ENCODE measurements at regions of chr3 and their contacts with region 1.

Region 1: DNA sequence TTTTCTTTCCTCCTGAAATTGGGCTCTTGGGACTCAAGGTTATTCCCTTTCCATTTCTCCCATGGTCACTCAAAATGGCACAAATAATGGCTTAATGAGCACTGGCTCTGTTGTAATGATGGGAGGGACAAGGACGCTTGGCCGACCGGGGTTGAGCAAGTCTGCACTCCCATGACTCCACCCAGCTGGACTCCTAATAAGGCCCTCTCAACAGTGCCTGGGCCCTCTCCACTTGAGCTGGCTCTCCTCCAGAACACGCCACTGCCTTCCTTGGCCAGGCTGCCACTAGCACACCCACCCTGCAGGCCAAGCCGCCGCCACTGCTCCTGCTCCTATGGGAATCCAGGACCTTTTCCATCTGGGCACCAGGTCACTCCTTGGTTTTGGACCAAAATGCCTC is 42.3 kb downstream of the ADCY5 start:
- DNase-seq: peak; percentile 89
- ATAC-seq: peak; percentile 72

Region 2: DNA sequence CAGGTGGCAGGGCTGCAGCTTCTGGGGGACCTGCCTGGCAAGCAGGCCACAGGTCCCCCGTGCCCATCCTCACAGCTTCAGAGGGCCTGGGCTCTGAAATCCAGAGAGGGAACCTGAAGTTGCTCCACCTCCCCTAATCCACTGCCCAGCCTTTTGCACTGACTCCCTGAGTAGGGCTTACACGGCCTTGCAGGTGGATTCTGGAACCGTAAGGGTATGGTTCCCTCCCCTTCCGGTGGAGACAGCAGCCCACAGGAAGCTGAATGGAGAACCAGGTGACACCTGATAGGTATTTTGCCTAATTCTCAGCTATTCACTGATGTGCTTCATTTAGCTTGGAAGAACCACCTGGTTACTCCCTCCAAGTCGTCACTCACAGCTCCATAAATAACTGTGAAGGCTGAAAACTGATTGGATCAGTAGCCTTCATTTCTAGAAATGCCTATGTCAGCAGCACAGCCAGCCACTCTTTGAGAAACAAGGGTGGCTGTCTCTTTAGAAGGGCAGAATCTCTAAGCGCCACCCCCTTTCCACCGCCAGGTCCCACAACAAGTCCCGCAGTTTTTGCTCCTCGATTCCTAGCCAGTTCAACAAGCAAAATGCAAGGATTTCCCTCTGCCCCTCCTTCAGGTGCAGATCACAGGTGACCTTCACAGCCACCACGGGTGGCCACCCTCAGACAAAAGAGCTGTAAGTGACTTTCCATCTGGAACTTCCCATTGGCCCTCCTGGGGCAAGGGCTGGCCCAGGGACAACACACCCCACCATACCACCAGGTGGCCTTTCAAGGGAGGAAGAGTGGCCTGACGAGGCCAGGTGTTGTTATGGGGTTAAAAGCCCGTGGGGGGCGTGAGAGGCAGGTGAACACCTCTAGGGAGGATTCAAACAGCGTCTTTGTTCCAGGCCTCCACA is 92.0 kb before region 1 on chr3:
- intact Hi-C with region 1: no loop called
- DNase-seq: peak; percentile 20
- ATAC-seq: peak; percentile 22

Region 3: DNA sequence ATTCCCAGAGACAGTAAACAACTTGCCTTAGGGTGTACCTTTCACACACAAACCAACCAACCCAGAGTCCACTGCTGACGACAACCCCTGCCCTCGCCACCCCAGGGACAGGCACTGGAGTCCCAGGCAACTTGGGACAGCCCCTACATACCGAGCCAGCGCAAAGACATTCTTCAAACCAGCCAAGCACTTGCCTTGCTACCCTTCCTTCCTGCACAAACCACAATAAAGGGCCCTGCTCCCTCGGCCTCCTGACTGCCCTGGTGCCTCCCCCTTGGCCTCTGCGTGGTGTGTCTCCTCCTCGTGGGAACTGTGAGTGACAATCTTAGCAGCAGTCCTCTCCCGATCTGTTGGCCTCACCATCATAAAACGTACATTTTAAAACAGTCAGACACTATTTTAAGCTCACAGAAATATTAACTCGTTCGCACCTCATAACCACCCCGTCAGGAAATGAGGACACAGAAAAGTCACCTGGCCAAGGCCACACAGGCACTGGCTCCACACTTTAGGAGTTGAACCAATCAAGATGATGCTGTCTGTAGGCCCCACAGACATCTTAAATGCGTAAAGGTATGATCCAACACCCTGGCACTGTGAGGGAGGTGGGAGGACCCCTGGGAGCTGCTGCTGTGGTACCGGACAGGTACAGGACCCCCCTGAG is 71.5 kb before region 1 on chr3:
- intact Hi-C with region 1: loop called (anchors 10 kb)
- DNase-seq: peak; percentile 38
- ATAC-seq: peak; percentile 5

Region 4: DNA sequence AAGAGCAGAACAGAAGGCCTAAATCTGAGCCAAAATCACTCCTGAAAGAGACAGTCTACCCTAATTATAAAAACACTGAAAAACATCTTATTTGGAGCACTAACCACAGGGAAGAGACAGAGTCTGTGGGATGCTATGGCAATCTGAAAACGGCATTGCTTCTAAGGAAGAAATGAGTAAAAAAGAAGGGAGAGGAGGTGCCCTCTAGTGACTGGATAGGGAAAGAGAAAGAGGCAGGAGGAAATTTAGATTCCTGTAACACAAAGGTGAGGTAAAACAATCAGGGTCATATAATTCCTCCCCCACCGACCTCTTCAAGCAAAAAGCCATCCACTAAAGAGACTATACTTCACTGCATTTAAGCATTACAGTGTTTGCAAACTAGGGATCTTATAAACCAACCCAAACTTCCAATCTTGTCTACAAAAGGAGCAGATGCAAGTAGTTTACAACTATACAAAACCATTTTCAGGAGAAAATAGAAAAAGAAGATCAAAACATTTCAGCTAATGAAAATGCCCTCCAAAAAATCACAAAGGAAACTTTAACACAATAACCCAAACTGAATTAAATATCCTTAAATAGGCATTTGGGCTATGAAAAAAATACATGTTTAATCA is 145.6 kb after region 1 on chr3:
- intact Hi-C with region 1: no loop called
- DNase-seq: no peak
- ATAC-seq: no peak